PC-3 (cell line): ENCODE measurements at regions of chr7 and their contacts with region 1.

Region 1: GRCh38 chr7:117269886-117270285 is 53.0 kb downstream of the WNT2 start:
- DNase-seq: peak; percentile 88
- ATAC-seq: peak; percentile 80
- H3K4me3 ChIP-seq: peak overlapping the region; percentile 59
- H3K27ac ChIP-seq: peak overlapping the region; percentile 98
- H3K4me1 ChIP-seq: peaks cover 26% of the 10 kb centered on the region
- H3K27me3 ChIP-seq: no peaks in the 10 kb centered on the region
- CTCF ChIP-seq: no peak

Region 2: GRCh38 chr7:117219485-117219884 is 50.4 kb before region 1 on chr7:
- CTCF ChIA-PET with region 1: no interaction called
- POLR2A ChIA-PET with region 1: no interaction called
- intact Hi-C with region 1: loop called (anchors 2 kb)
- DNase-seq: no peak
- ATAC-seq: peak; percentile 40; the same call in 1 of the 2 replicates
- H3K4me3 ChIP-seq: no peak overlapping the region
- H3K27ac ChIP-seq: no peak overlapping the region
- H3K4me1 ChIP-seq: no peaks in the 10 kb centered on the region
- H3K27me3 ChIP-seq: no peaks in the 10 kb centered on the region
- CTCF ChIP-seq: no peak

Region 3: DNA sequence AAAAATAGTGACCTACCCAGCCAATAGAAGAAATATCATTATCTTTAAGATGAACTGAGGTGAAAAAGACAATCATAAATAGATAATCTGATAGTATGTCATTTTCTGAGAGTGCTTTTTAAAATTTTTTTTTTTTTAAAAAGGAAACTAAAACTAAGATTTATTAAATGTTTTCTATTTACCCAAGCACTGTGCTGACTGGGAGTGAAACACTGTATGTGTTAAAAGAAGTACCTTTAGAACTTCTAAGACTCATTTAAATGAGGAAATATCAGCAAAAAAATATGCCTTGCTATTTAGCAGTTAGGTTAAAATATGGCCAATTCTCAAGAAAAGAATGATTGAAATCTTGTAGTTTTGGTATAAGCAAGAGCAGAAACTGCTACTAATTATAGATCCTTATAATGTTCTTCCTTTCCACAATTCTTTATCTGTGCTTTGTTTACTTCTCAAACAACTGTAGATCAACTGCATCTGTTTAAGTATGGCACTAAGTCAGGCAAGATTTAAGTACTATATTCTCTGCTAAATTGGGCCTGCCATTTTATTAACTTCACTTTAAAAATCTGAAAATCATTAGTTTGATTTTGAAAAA is 92.5 kb after region 1 on chr7:
- CTCF ChIA-PET with region 1: no interaction called
- POLR2A ChIA-PET with region 1: no interaction called
- intact Hi-C with region 1: no loop called
- DNase-seq: no peak
- ATAC-seq: no peak
- H3K4me3 ChIP-seq: no peak overlapping the region
- H3K27ac ChIP-seq: no peak overlapping the region
- H3K4me1 ChIP-seq: no peaks in the 10 kb centered on the region
- H3K27me3 ChIP-seq: peaks cover 73% of the 10 kb centered on the region
- CTCF ChIP-seq: no peak